GM10248 (cell line): ENCODE measurements at regions of chr12 and their contacts with region 1.

Region 1: DNA sequence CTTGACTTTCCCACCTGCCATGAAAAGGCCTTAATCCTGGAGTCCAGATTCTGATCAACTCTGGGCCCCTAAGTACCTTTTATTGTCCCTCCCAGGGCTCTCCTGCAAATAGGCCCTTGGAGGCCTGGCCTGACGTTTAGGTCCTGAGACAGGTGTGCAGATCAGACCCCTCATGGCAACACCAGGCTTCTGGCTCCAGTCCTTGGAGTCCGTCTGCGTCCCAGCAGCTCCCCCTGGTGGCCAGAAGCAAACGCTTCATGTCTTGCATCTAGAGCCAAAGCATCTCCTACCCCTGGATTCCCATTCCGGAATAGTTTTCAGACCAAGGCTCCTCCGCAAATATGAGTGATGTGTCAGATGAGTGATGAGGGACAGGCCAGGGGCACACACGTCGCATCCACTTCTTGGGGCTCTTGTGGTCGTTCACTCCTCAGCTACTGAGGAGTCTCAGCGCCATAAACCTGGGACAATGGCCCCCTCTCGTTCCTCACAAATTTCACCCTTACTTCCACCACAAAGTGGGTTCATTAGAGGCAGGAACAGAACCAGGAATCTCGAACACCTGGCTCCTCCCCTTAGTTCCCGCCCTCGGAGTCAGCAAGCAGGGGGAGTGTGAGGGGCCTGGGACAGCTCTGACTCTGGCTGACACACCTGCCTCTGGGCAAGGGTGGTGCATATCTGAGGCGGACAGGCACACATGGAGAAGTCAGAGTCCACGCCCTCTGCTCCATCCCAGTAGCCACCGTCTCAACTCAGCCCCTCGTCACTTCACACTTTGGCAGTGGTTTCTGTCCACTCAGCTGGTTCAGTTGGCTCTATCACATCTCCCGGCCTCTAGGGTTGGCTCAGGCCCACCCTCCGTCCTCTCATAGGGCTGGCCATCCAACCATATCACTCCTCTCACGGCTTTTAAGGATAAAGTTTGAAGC is 77.9 kb upstream of the PWP1 start:
- DNase-seq: peak; percentile 80
- CTCF ChIP-seq: peak; percentile 92

Region 2: GRCh38 chr12:107109741-107110719 is 497.7 kb before region 1 on chr12:
- CTCF ChIA-PET with region 1: interaction called, 12 read pairs
- POLR2A ChIA-PET with region 1: no interaction called
- DNase-seq: no peak
- CTCF ChIP-seq: no peak

Region 3: GRCh38 chr12:107402041-107403022 is 205.4 kb before region 1 on chr12:
- CTCF ChIA-PET with region 1: interaction called, 23 read pairs
- POLR2A ChIA-PET with region 1: no interaction called
- DNase-seq: peak; percentile 45
- CTCF ChIP-seq: peak; percentile 61

Region 4: DNA sequence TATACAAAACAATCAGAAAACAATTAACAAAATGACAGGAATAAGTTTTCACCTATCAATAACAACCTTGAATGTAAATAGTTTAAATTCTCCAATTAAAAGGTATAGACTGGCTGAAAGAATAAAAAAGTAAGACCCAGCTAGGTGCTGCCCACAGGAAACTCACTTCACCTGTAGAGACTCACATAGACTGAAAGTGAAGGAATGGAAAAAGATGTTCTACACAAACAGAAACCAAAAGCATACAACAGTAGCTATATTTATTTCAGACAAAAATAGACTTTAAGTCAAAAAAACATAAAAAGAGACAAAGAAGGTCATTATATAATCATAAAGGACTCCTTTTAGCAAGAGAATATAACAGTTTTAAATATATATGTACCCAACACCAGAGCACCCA is 74.5 kb before region 1 on chr12:
- CTCF ChIA-PET with region 1: interaction called, 11 read pairs
- POLR2A ChIA-PET with region 1: no interaction called
- DNase-seq: no peak
- CTCF ChIP-seq: no peak

Region 5: DNA sequence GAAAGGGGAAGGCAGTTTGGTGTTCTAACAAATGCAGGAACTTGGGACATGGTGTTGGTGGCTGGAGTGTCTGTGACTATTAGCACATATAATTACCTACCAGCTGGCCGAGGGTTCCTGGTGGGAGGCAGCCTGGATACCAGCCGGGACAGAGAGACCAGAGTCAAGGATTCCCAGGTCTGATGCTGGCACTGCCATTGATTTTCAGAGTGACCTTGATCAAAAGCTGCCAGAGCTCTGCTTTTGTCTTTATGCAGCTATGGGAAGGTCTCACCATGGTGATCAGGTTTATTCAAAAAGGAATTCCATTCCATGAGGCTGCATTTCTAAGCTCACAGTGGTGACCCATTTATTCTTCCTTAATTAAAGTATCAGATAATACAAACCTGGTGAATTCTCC is 23.2 kb before region 1 on chr12:
- CTCF ChIA-PET with region 1: interaction called, 19 read pairs
- POLR2A ChIA-PET with region 1: no interaction called
- DNase-seq: no peak
- CTCF ChIP-seq: no peak

Region 6: DNA sequence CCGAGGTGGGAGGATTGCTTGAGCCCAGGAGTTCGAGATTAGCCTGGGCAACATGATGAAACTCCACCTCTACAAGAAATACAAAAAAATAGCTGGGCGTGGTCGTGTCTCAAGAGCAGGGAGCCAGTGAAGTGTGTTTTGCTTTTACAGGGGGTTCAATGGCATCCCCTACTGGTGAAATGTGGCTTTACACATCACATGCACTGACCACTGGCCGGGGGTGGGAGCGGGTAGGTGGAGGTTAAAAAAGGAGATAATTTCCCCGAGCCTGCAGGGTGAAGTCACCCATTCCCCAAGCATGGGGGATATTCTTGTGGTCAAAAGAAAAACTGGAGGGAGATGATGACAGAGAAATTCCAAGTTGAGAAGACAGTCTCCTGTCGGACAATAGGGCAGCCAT is 14.3 kb after region 1 on chr12:
- CTCF ChIA-PET with region 1: interaction called, 45 read pairs
- POLR2A ChIA-PET with region 1: no interaction called
- DNase-seq: peak; percentile 31
- CTCF ChIP-seq: peak; percentile 53

Region 7: DNA sequence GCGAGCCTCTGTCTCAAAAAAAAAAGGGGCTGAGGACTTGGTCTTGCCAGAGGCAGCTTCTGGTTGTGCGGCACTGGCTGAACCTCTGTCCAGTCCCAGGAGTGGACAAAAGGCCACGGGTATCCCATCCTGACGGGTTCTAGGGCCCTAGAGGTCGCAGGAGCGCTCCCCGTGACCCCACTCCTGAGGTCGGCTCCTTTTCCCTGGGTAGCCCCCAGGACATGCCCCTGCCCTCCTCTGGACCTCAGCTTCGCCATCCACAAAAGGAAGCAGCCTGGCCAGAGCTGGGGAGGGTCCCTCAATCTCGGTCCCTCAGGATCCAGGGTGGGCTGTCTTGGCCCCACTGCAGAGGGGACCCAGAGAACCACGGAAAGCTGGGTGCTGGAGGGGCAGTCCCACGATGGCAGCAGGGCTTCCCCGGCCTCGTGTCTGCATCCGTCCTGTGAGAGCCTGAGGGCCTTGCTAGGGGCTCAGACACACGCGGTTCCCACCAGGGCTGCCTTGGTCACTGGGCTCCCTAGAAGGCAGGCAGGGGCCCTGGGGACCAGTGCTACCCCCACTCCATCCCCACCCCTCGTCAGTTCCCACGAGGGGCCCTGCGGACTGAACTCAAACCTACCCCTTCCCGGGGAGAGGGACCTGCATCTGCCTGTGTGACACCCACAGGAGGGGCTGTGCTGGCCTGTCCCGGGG is 197.9 kb after region 1 on chr12:
- CTCF ChIA-PET with region 1: no interaction called
- POLR2A ChIA-PET with region 1: no interaction called
- DNase-seq: no peak
- CTCF ChIP-seq: no peak